Activated naive CD4-positive, alpha-beta T cell treated with anti-CD3 and anti-CD28 coated beads, Interleukin-2, amount 10 ng/mL, durations not matched to agents 7 days and 5 days (primary cell): ENCODE measurements at regions of chr15 and their contacts with region 1.

Region 1: DNA sequence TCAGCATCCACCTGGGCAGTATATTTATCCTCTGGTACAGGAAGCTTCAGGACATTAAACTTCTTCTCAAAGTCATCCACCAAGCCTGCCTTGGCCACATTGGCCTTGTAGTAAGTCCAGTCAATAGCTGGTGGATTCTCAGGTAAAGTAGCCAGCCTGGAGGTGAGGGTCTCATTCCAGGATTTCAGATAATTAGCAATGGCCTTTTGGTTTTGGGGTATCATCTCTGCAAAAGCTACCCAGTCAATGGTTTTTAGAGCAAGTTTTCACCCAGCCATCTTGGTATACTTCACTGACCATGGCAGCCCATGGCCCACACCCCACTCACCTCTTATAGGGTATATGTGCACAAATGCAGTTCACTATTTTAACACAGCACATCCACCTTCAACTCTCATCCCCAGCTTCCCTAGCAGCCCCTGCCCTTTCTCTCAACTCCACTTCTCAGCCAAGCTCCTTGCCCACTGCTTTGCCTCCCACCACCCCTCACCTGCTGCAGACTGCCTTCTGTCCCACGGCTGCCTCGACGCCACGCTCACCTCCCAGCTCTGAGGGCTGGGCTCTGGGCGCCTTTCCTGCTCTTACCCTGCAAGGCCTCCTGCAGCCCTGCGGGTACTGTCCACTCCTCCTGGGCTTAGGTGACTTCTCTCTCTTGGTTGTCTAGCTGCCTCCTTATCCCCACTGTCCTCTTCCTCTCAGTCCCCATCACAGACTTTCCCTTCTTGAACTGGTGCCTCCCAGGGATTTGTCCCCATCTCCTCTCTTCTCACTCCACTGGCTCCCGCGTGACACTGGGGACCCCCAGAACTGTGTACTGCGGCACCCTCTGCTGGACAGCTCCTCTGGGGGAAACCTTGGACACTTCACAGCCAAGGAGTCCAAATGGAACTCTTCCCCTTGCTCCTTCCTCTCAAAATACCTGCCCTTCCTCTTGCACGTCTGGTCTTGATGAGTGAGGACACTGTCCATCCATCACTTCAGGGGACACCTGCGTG is 1.7 kb upstream of the TGM5 start:
- DNase-seq: peak; percentile 32
- H3K4me3 Mint-ChIP-seq: no peak overlapping the region
- H3K27ac Mint-ChIP-seq: no peak overlapping the region
- H3K4me1 Mint-ChIP-seq: peaks cover 16% of the 10 kb centered on the region
- H3K27me3 Mint-ChIP-seq: peaks cover 50% of the 10 kb centered on the region

Region 2: GRCh38 chr15:43230640-43231115 is 37.7 kb before region 1 on chr15:
- CTCF ChIA-PET with region 1: interaction called, 111 read pairs
- DNase-seq: peak; percentile 6
- H3K4me3 Mint-ChIP-seq: no peak overlapping the region
- H3K27ac Mint-ChIP-seq: no peak overlapping the region
- H3K4me1 Mint-ChIP-seq: no peaks in the 10 kb centered on the region
- H3K27me3 Mint-ChIP-seq: peaks cover 39% of the 10 kb centered on the region

Region 3: GRCh38 chr15:43253431-43254403 is 14.7 kb before region 1 on chr15:
- CTCF ChIA-PET with region 1: interaction called, 10 read pairs
- DNase-seq: no peak
- H3K4me3 Mint-ChIP-seq: no peak overlapping the region
- H3K27ac Mint-ChIP-seq: no peak overlapping the region
- H3K4me1 Mint-ChIP-seq: peaks cover 26% of the 10 kb centered on the region
- H3K27me3 Mint-ChIP-seq: peaks cover 37% of the 10 kb centered on the region

Region 4: GRCh38 chr15:43316016-43316970 is 47.9 kb after region 1 on chr15:
- CTCF ChIA-PET with region 1: no interaction called
- DNase-seq: no peak
- H3K4me3 Mint-ChIP-seq: no peak overlapping the region
- H3K27ac Mint-ChIP-seq: no peak overlapping the region
- H3K4me1 Mint-ChIP-seq: no peaks in the 10 kb centered on the region
- H3K27me3 Mint-ChIP-seq: peaks cover 44% of the 10 kb centered on the region

Region 5: GRCh38 chr15:43352693-43353382 is 84.4 kb after region 1 on chr15:
- CTCF ChIA-PET with region 1: no interaction called
- DNase-seq: no peak
- H3K4me3 Mint-ChIP-seq: no peak overlapping the region
- H3K27ac Mint-ChIP-seq: no peak overlapping the region
- H3K4me1 Mint-ChIP-seq: peaks cover 14% of the 10 kb centered on the region
- H3K27me3 Mint-ChIP-seq: no peaks in the 10 kb centered on the region

Region 6: DNA sequence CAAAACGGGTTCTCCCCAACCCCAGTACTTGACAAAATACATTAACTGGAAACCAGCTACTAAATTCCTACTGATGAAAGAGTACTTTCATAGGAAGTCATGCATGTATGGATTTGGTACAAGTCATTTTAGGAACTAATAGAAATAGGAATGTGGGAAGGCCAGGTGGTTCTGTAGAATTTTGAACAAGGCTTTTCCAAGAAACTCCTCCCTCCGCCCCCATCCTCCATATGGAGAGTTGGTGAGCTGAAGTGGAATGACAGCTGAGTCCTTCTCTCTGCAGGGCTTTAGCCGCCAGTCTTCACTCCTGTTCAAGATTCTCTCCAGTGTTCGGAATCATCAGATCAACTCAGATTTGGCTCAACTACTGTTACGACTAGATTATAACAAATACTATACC is 135.7 kb after region 1 on chr15:
- CTCF ChIA-PET with region 1: no interaction called
- DNase-seq: no peak
- H3K4me3 Mint-ChIP-seq: no peak overlapping the region
- H3K27ac Mint-ChIP-seq: no peak overlapping the region
- H3K4me1 Mint-ChIP-seq: peaks cover 4% of the 10 kb centered on the region
- H3K27me3 Mint-ChIP-seq: no peaks in the 10 kb centered on the region